ENCODE measurements at regions of chr14 and their contacts with region 1.

Region 1: GRCh38 chr14:63852817-63853731 is at the start of gene SYNE2:
- DNase-seq: no peak
- H3K4me3 ChIP-seq: peak within 1 kb of the TSS; percentile 80 to 99 (median 93)
- H3K27ac ChIP-seq: peak within 1 kb of the TSS; percentile 91 to 97 (median 95)
- H3K4me1 ChIP-seq: peaks cover 18 to 26% (median 21%) of the 10 kb centered on the region in 4 donors
- H3K27me3 ChIP-seq: no peaks in the 10 kb centered on the region
- CTCF ChIP-seq: peak; percentile 35 to 56 (median 42)
- EP300 ChIP-seq: no peak
- POLR2A ChIP-seq: no peak
- total RNA-seq, gene SYNE2: 92.4 to 165 (median 98.3) TPM

Region 2: GRCh38 chr14:63737582-63738006 is 115.5 kb before region 1 on chr14:
- intact Hi-C with region 1: no loop called
- DNase-seq: no peak
- H3K4me3 ChIP-seq: no peak overlapping the region
- H3K27ac ChIP-seq: no peak overlapping the region
- H3K4me1 ChIP-seq: no peaks in the 10 kb centered on the region
- H3K27me3 ChIP-seq: no peaks in the 10 kb centered on the region
- CTCF ChIP-seq: no peak
- EP300 ChIP-seq: no peak
- POLR2A ChIP-seq: no peak

Region 3: GRCh38 chr14:63922696-63923421 is 69.8 kb after region 1 on chr14:
- intact Hi-C with region 1: loop called (anchors 5 kb)
- DNase-seq: peak; percentile 8
- H3K4me3 ChIP-seq: no peak overlapping the region
- H3K27ac ChIP-seq: peak overlapping the region; percentile 42 to 68 (median 59)
- H3K4me1 ChIP-seq: peaks cover 6 to 29% (median 14%) of the 10 kb centered on the region in 4 donors
- H3K27me3 ChIP-seq: no peaks in the 10 kb centered on the region
- CTCF ChIP-seq: no peak
- EP300 ChIP-seq: no peak
- POLR2A ChIP-seq: no peak

Region 4: DNA sequence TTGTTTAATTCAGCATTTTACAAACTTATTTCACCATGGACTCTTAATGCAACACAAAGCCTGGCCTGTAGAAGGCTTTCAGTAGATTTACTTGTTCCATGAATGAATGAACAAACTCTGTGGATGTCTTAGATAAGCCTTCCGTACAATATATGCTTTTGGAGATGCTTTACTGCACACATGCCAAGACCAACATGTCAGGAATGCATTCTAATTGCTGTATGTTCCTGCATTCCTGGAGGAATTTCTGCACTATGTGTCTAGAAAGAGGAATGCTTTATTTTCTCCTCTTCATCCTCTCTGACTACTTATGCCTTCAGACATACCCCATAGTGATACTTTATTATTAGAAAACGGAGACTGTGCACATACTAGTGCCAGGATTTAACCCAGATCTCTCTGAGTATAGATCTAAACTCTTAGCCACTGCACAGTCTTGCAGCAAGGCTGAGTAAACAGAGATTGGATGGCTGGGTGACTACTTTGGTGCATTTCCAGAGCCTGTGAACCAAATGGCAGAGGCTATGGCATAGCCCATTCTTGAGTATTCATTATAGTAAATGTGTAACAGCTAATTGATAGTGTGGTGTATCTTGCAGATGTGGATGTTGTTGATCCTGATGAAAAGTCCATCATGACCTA is 108.0 kb after region 1 on chr14:
- intact Hi-C with region 1: loop called (anchors 10 kb)
- DNase-seq: no peak
- H3K4me3 ChIP-seq: no peak overlapping the region
- H3K27ac ChIP-seq: no peak overlapping the region
- H3K4me1 ChIP-seq: peaks cover 0 to 22% (median 19%) of the 10 kb centered on the region in 4 donors
- H3K27me3 ChIP-seq: no peaks in the 10 kb centered on the region
- CTCF ChIP-seq: no peak
- EP300 ChIP-seq: no peak
- POLR2A ChIP-seq: no peak

Region 5: DNA sequence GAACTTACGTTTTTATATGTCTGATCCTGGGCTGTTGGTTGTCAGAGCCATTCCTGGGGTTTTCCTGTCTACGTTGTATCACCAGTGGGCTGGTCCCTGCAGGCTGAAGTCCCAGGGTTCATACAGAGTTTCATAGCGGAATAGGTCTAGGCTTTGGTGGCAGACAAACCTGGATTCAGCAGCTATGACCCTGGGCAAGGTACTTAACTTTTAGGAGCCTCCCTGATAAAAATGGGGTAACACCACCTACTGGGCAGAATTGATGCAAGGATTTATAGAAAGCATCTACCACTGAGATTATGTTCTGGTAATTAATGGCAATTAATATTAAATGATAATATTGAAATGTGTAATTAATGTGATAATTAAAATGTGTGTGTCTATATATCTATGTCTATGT is 140.9 kb after region 1 on chr14:
- intact Hi-C with region 1: loop called (anchors 10 kb)
- DNase-seq: no peak
- H3K4me3 ChIP-seq: no peak overlapping the region
- H3K27ac ChIP-seq: no peak overlapping the region
- H3K4me1 ChIP-seq: no peaks in the 10 kb centered on the region
- H3K27me3 ChIP-seq: no peaks in the 10 kb centered on the region
- CTCF ChIP-seq: peak in 1 of 3 experiments; percentile 39
- EP300 ChIP-seq: no peak
- POLR2A ChIP-seq: no peak

Measured in esophagus muscularis mucosa (tissue), 4 donors.